ENCODE measurements at regions of chr3 and their contacts with region 1.

Region 1: DNA sequence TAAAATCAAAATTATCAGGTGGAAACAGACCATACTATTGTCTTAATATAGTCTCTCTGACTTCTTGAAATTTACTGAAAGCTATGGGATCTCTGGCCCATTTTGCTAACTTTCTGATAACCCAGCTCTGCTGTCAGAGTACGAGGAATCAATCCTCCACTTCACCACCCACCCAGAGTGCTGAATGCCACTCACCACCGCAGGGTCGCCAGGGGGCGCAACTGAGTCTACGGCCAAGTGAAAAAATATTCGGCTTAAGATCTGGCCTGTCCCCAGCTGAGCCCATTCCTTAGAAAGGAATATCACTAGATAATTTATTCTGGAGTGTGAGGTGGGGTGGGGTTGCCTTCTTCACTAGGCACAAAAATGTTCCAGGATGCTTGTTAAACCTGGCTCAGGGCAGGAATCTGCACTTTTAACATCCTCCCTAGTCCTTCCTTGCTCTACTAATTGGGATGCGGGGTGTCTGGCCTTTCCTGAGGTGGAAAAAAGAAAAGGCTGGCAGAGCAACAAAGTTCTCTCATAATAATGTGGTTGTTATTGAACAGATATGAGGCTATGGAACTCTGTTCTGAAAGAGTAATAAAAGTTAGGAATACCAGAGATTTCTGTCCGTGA is 520.6 kb downstream of the MFSD1 start:
- DNase-seq: no peak
- H3K4me3 ChIP-seq: no peak overlapping the region
- H3K27ac ChIP-seq: no peak overlapping the region
- H3K4me1 ChIP-seq: peaks cover 5% of the 10 kb centered on the region
- H3K27me3 ChIP-seq: no peaks in the 10 kb centered on the region
- CTCF ChIP-seq: peak; percentile 74 to 80

Region 2: GRCh38 chr3:159458010-159458409 is 135.6 kb after region 1 on chr3:
- CTCF ChIA-PET with region 1: no interaction called
- dilution Hi-C with region 1: no loop called
- in situ Hi-C with region 1: no loop called
- intact Hi-C with region 1: loop called (anchors 1 kb)
- DNase-seq: peak; percentile 97
- H3K4me3 ChIP-seq: no peak overlapping the region
- H3K27ac ChIP-seq: peak overlapping the region; percentile 66
- H3K4me1 ChIP-seq: peaks cover 28% of the 10 kb centered on the region
- H3K27me3 ChIP-seq: no peaks in the 10 kb centered on the region
- CTCF ChIP-seq: peak in 1 of 2 donors; percentile 5

Region 3: GRCh38 chr3:159503944-159504343 is 181.5 kb after region 1 on chr3:
- CTCF ChIA-PET with region 1: interaction called, 4 read pairs
- dilution Hi-C with region 1: no loop called
- in situ Hi-C with region 1: no loop called
- intact Hi-C with region 1: loop called (anchors 1 kb)
- DNase-seq: no peak
- H3K4me3 ChIP-seq: no peak overlapping the region
- H3K27ac ChIP-seq: no peak overlapping the region
- H3K4me1 ChIP-seq: peaks cover 4% of the 10 kb centered on the region
- H3K27me3 ChIP-seq: peaks cover 2% of the 10 kb centered on the region
- CTCF ChIP-seq: peak in 1 of 2 donors; percentile 39

Measured in mammary epithelial cell (primary cell).